B cell (primary cell): ENCODE measurements at regions of chr15 and their contacts with region 1.

Region 1: GRCh38 chr15:90031231-90031791 is 30.2 kb downstream of the ZNF710 start:
- DNase-seq: peak; percentile 55
- ATAC-seq: peak; percentile 87
- H3K4me3 ChIP-seq: peak overlapping the region in 4 of 5 experiments; percentile 12 to 40 (median 32)
- H3K4me3 Mint-ChIP-seq: peak overlapping the region; percentile 78
- H3K27ac ChIP-seq: peak overlapping the region; percentile 5 to 6
- H3K27ac Mint-ChIP-seq: peak overlapping the region; percentile 79
- H3K4me1 ChIP-seq: peaks cover 34 to 43% of the 10 kb centered on the region in 2 donors
- H3K4me1 Mint-ChIP-seq: peaks cover 46% of the 10 kb centered on the region
- H3K27me3 ChIP-seq: no peaks in the 10 kb centered on the region
- H3K27me3 Mint-ChIP-seq: no peaks in the 10 kb centered on the region
- CTCF ChIP-seq: no peak

Region 2: GRCh38 chr15:90046911-90047392 is 15.6 kb after region 1 on chr15:
- CTCF ChIA-PET with region 1: interaction called, 4 read pairs
- POLR2A ChIA-PET with region 1: interaction called, 7 read pairs
- intact Hi-C with region 1: loop called (anchors 1 kb)
- DNase-seq: peak; percentile 79
- ATAC-seq: peak; percentile 89
- H3K4me3 ChIP-seq: peak overlapping the region in 3 of 5 experiments; percentile 3 to 42 (median 15)
- H3K4me3 Mint-ChIP-seq: peak overlapping the region; percentile 66
- H3K27ac ChIP-seq: peak overlapping the region; percentile 84 to 87
- H3K27ac Mint-ChIP-seq: peak overlapping the region; percentile 94
- H3K4me1 ChIP-seq: peaks cover 40 to 55% of the 10 kb centered on the region in 2 donors
- H3K4me1 Mint-ChIP-seq: peaks cover 62% of the 10 kb centered on the region
- H3K27me3 ChIP-seq: no peaks in the 10 kb centered on the region
- H3K27me3 Mint-ChIP-seq: no peaks in the 10 kb centered on the region
- CTCF ChIP-seq: no peak

Region 3: DNA sequence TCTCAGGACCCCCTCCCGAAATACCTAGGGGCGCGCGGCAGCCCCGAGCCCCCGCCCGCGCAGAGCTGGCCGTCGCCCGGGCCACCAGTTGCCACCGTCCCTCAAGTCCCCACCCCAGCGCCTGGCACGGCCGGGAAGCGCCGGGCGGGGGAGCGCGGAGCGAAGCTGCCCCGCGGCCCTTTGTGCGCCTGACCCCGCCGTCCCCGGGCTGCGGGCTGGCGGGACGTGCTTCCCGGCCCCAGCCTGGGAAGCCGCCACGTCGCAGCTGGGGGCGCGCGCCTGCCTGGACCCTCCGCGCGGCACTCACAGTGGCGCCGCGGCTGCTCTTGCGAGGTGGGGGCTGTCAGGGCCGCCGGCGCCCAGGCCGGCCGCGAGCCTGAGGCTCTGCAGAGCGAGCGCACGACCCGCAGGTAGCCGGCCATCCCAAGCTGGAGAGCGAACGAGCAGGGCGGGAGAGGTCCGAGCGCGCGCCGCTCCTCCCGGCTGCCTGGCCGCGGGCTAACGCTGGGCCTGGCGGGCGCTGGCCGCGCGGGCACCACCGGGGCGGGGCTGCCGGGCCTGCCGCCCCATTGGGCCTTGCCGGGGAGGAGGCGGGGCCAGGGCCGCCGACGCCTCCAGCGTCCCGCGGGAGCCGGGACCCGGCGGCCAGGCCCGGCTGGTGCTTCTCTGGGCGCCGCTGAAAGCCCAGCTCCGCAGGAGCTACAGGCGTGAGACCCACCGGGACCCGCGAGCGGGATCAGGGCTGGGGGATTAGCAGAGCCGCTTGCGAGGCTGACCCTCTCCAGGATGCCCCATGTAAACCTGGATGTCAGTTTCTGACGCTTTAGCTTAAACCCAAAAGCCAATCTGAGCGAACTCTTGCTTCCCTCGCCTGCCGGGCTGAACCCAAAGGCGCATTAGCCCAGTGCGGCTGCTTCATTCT is 70.9 kb after region 1 on chr15 and contains the start of gene IDH2:
- CTCF ChIA-PET with region 1: no interaction called
- POLR2A ChIA-PET with region 1: no interaction called
- intact Hi-C with region 1: loop called (anchors 2 kb)
- DNase-seq: peak; percentile 84
- ATAC-seq: peak; percentile 88
- H3K4me3 ChIP-seq: peak within 1 kb of the TSS; percentile 39 to 76 (median 73)
- H3K4me3 Mint-ChIP-seq: peak within 1 kb of the TSS; percentile 90
- H3K27ac ChIP-seq: peak within 1 kb of the TSS; percentile 53 to 81
- H3K27ac Mint-ChIP-seq: peak within 1 kb of the TSS; percentile 97
- H3K4me1 ChIP-seq: peaks cover 43 to 47% of the 10 kb centered on the region in 2 donors
- H3K4me1 Mint-ChIP-seq: peaks cover 45% of the 10 kb centered on the region
- H3K27me3 ChIP-seq: peaks cover 0 to 5% (median 1%) of the 10 kb centered on the region in 4 experiments
- H3K27me3 Mint-ChIP-seq: peaks cover 6% of the 10 kb centered on the region
- CTCF ChIP-seq: no peak
- total RNA-seq, gene IDH2: 30.7 and 33.3 TPM in 2 replicates